ENCODE measurements at regions of chr11 and their contacts with region 1.

Region 1: GRCh38 chr11:102733232-102733875 is 8.6 kb upstream of the MMP8 start:
- DNase-seq: peak; percentile 72
- H3K4me3 ChIP-seq: no peak overlapping the region
- H3K27ac ChIP-seq: no peak overlapping the region
- H3K4me1 ChIP-seq: no peaks in the 10 kb centered on the region
- H3K27me3 ChIP-seq: no peaks in the 10 kb centered on the region
- CTCF ChIP-seq: peak; percentile 49 to 74 (median 65)
- EP300 ChIP-seq: no peak
- POLR2A ChIP-seq: no peak

Region 2: DNA sequence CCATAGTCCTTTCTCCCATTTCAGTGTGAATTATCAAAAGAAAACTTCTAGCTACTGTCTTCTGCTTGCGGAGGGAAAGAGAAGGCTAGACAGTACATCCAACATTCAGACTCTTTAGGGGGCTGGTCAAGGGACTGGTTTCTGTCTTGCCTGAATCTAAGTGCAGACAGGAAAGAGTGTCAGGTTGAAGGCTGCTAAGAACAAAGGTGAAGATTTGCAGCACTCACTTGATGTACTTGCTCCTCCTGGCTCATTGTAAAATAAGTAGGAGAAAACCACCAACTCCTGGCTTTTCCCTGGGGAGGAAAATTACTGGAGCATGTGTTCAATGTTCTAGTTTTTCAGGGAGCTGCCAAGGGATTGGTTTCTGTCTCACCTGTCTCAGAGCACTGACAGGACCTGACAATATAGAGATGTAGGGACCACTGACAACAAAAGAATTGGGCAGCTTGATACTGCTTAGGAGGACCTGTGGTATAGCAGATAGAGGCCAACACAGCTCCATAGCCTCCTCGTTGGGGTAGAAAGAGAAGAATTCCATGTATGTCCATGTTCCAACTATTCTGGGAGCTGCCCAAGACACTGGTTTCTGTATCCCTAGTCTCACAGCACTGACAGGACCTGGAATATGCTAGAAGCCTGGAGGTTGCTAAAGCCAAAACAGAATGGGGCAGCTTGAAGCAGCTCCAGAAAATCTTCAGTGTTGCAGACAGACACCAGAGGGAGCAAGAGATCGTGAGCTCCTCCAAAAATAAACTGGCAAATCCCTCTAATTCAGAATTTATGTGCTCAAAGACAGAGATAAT is 181.1 kb after region 1 on chr11:
- in situ Hi-C with region 1: no loop called
- intact Hi-C with region 1: no loop called
- DNase-seq: peak; percentile 13
- H3K4me3 ChIP-seq: no peak overlapping the region
- H3K27ac ChIP-seq: peak overlapping the region in 3 of 4 donors; percentile 30 to 53 (median 40)
- H3K4me1 ChIP-seq: peaks cover 0 to 20% (median 0%) of the 10 kb centered on the region in 4 donors
- H3K27me3 ChIP-seq: no peaks in the 10 kb centered on the region
- CTCF ChIP-seq: peak; percentile 52 to 69 (median 55)
- EP300 ChIP-seq: no peak
- POLR2A ChIP-seq: no peak

Region 3: DNA sequence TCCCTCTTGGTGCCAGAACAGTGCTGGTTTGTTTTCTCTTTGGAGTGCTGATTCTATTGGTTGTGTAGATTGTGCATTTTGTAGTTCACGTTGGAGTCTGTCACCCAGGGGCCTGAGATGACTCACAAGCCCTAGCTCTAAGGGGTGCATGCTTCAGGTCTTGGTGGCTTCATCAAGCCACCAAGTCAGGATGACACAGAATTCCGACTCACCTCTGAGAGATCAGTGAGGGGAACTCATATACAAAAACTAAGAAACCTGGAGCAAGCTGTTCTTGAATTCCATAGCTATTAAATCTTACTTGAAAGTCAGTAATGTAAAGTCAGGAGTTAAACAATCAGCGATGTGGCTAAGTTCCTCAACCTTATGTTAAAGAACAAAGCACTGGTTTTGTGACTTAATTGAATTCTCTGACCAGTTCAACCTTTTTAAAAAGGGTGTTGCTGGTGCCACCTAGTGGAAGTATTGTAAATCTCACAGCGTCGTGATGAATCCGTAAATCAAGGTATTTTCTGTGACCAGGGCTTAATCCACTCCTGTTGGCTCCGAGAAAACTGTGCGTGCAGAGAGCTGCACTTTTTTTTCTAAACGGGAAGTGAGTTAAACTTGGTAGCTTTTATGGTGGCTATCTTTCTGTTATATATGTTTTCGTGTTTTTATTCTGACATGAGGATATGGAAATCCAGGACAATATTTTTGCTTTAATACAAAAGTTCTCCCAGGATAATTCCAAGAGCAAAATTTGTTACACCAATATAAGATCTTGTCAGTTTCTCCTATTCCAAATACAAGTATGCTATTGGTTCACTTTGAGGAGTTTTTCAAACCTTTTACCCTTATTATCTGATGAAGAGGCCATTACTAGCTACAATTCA is 207.6 kb after region 1 on chr11:
- in situ Hi-C with region 1: loop called in 2 of 4 experiments (anchors 25 kb)
- intact Hi-C with region 1: no loop called
- DNase-seq: peak; percentile 45
- H3K4me3 ChIP-seq: no peak overlapping the region
- H3K27ac ChIP-seq: no peak overlapping the region
- H3K4me1 ChIP-seq: peaks cover 0 to 5% (median 2%) of the 10 kb centered on the region in 4 donors
- H3K27me3 ChIP-seq: no peaks in the 10 kb centered on the region
- CTCF ChIP-seq: peak; percentile 75 to 87 (median 83)
- EP300 ChIP-seq: no peak
- POLR2A ChIP-seq: no peak

Measured in transverse colon (tissue), 4 donors.